CD4-positive, alpha-beta T cell (primary cell): ENCODE measurements at regions of chr2 and their contacts with region 1.

Region 1: GRCh38 chr2:73385595-73386341 is at the start of gene ALMS1:
- DNase-seq: peak; percentile 73 to 97 (median 86)
- ATAC-seq: peak; percentile 90
- H3K4me3 ChIP-seq: peak within 1 kb of the TSS; percentile 78
- H3K4me3 Mint-ChIP-seq: peak within 1 kb of the TSS; percentile 92
- H3K27ac ChIP-seq: peak within 1 kb of the TSS; percentile 75 to 78
- H3K27ac Mint-ChIP-seq: peak within 1 kb of the TSS; percentile 97
- H3K4me1 ChIP-seq: peaks cover 20% of the 10 kb centered on the region
- H3K4me1 Mint-ChIP-seq: peaks cover 45% of the 10 kb centered on the region
- H3K27me3 ChIP-seq: no peaks in the 10 kb centered on the region
- H3K27me3 Mint-ChIP-seq: no peaks in the 10 kb centered on the region
- CTCF ChIP-seq: no peak
- total RNA-seq, gene ALMS1: 20.2 to 20.6 TPM

Region 2: GRCh38 chr2:73071360-73072133 is 314.2 kb before region 1 on chr2 and contains the start of gene SFXN5:
- CTCF ChIA-PET with region 1: no interaction called
- POLR2A ChIA-PET with region 1: no interaction called
- intact Hi-C with region 1: loop called (anchors 5 to 10 kb)
- DNase-seq: peak; percentile 87 to 96 (median 92)
- ATAC-seq: peak; percentile 84
- H3K4me3 ChIP-seq: peak within 1 kb of the TSS; percentile 84
- H3K4me3 Mint-ChIP-seq: peak within 1 kb of the TSS; percentile 99
- H3K27ac ChIP-seq: peak within 1 kb of the TSS; percentile 81 to 86
- H3K27ac Mint-ChIP-seq: peak within 1 kb of the TSS; percentile 91
- H3K4me1 ChIP-seq: peaks cover 21% of the 10 kb centered on the region
- H3K4me1 Mint-ChIP-seq: peaks cover 31% of the 10 kb centered on the region
- H3K27me3 ChIP-seq: no peaks in the 10 kb centered on the region
- H3K27me3 Mint-ChIP-seq: no peaks in the 10 kb centered on the region
- CTCF ChIP-seq: no peak
- total RNA-seq, gene SFXN5: 5.1 to 5.4 TPM

Region 3: GRCh38 chr2:73212448-73213176 is 173.2 kb before region 1 on chr2:
- CTCF ChIA-PET with region 1: interaction called, 5 read pairs
- POLR2A ChIA-PET with region 1: interaction called, 4 read pairs
- intact Hi-C with region 1: loop called in 1 of 2 experiments (anchors 2 kb)
- DNase-seq: peak; percentile 56 to 86 (median 64)
- ATAC-seq: peak; percentile 59
- H3K4me3 ChIP-seq: no peak overlapping the region
- H3K4me3 Mint-ChIP-seq: peak overlapping the region; percentile 84
- H3K27ac ChIP-seq: no peak overlapping the region
- H3K27ac Mint-ChIP-seq: peak overlapping the region; percentile 81
- H3K4me1 ChIP-seq: peaks cover 32% of the 10 kb centered on the region
- H3K4me1 Mint-ChIP-seq: peaks cover 37% of the 10 kb centered on the region
- H3K27me3 ChIP-seq: no peaks in the 10 kb centered on the region
- H3K27me3 Mint-ChIP-seq: peaks cover 23% of the 10 kb centered on the region
- CTCF ChIP-seq: peak; percentile 85

Region 4: GRCh38 chr2:73293534-73294171 is 92.1 kb before region 1 on chr2 and contains the start of gene EGR4:
- CTCF ChIA-PET with region 1: no interaction called
- POLR2A ChIA-PET with region 1: interaction called, 4 read pairs
- intact Hi-C with region 1: loop called (anchors 2 to 5 kb)
- DNase-seq: peak; percentile 78 to 96 (median 84)
- ATAC-seq: peak; percentile 94
- H3K4me3 ChIP-seq: peak within 1 kb of the TSS; percentile 48
- H3K4me3 Mint-ChIP-seq: peak within 1 kb of the TSS; percentile 82
- H3K27ac ChIP-seq: no peak within 1 kb of the TSS
- H3K27ac Mint-ChIP-seq: no peak within 1 kb of the TSS
- H3K4me1 ChIP-seq: peaks cover 30% of the 10 kb centered on the region
- H3K4me1 Mint-ChIP-seq: peaks cover 21% of the 10 kb centered on the region
- H3K27me3 ChIP-seq: peaks cover 61 to 79% of the 10 kb centered on the region in 2 experiments
- H3K27me3 Mint-ChIP-seq: peaks cover 91% of the 10 kb centered on the region
- CTCF ChIP-seq: no peak
- total RNA-seq, gene EGR4: 0.14 to 0.17 TPM

Region 5: DNA sequence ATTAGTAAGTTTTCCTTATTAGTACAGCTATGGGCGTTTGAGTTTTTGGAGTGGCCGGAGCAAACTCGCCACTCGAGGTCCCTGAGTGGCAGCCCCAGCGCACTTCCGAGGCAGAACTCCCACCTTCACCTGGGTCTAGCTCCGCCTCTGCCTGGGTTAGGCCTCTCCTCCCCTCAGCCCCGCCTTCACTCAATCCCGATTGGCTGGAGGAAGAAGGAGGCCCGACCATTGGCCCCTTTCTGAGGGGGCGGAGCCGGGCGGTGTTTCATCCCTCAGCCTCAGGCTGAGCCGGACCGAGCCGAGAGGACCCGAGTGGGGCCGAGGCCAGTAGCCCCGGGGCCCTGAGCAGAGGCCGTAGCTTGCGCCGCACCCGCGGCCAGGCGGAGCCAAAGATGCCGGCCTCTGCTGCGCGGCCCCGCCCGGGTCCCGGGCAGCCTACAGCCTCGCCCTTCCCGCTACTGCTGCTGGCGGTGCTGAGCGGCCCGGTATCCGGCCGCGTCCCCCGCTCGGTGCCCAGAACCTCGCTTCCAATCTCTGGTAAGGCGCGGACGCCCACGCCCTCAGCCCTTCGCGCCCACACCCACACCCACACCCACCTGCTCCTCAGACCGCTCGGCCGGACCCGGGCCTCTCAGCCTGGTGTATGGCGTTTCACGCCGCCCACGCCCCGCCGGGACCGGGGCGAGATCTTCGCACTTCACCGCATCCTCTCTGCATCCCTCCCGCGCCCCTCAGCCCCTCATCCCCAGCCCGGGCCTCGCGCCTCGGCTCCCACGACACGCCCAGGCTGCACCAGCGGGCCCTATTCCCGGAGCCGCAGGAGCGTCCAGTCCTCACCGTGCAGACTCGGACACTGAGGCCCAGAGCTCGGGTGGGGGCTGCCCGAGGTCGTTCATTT is 1268.5 kb after region 1 on chr2 and contains the start of gene SEMA4F:
- CTCF ChIA-PET with region 1: no interaction called
- POLR2A ChIA-PET with region 1: no interaction called
- intact Hi-C with region 1: loop called in 1 of 2 experiments (anchors 10 kb)
- DNase-seq: peak; percentile 83 to 96 (median 92)
- ATAC-seq: peak; percentile 99
- H3K4me3 ChIP-seq: peak within 1 kb of the TSS; percentile 80
- H3K4me3 Mint-ChIP-seq: peak within 1 kb of the TSS; percentile 88
- H3K27ac ChIP-seq: no peak within 1 kb of the TSS
- H3K27ac Mint-ChIP-seq: peak within 1 kb of the TSS; percentile 80
- H3K4me1 ChIP-seq: peaks cover 18% of the 10 kb centered on the region
- H3K4me1 Mint-ChIP-seq: peaks cover 26% of the 10 kb centered on the region
- H3K27me3 ChIP-seq: peaks cover 2 to 5% of the 10 kb centered on the region in 2 experiments
- H3K27me3 Mint-ChIP-seq: peaks cover 14% of the 10 kb centered on the region
- CTCF ChIP-seq: no peak
- total RNA-seq, gene SEMA4F: 6.8 to 7.3 TPM